ENCODE measurements at regions of chr3 and their contacts with region 1.

Region 1: GRCh38 chr3:18382760-18383369 is 42.3 kb downstream of the SATB1 start:
- DNase-seq: no peak
- ATAC-seq: peak; percentile 32
- H3K4me3 ChIP-seq: no peak overlapping the region
- H3K4me3 Mint-ChIP-seq: peak overlapping the region in 9 of 10 donors; percentile 4 to 74 (median 49)
- H3K27ac ChIP-seq: no peak overlapping the region
- H3K27ac Mint-ChIP-seq: peak overlapping the region; percentile 34 to 91 (median 51)
- H3K4me1 ChIP-seq: peaks cover 0 to 46% of the 10 kb centered on the region in 2 donors
- H3K4me1 Mint-ChIP-seq: peaks cover 19 to 94% (median 84%) of the 10 kb centered on the region in 7 donors
- H3K27me3 ChIP-seq: no peaks in the 10 kb centered on the region
- H3K27me3 Mint-ChIP-seq: no peaks in the 10 kb centered on the region

Region 2: DNA sequence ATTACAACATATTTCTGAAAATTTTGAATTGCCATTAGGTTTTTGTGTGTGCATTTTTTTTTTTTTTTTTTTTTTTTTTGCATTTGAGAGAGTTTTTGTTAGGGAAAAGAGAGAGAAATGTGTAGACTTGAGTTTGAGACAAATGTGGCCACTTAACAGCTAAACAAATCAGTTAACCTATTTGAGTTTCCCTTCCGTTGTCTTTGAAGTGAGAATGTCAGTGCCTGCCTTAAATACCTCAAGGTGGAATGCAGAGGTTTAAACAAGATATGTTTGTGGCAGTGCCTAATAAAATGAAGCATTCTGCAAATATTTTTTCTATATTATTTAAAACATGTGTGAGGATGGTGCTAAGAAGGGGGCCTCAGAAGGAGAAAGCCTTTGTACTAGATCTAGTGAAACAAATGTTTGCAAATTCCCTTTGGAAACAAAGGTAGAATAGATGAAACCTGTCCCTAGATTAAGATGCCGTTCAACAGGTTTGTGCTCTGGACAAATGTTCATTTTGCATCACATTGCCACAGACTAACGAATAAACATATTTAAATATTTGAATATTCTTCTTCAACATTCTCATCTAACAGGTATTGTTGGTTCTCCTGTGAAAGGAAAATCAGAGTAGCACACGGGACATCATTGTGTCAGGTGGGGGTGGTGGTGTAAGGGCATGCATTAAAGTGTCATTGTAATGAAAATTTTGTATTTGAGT is 38.4 kb before region 1 on chr3:
- CTCF ChIA-PET with region 1: interaction called, 3 read pairs
- POLR2A ChIA-PET with region 1: no interaction called
- intact Hi-C with region 1: loop called in 1 of 2 experiments (anchors 5 kb)
- DNase-seq: peak in 1 of 9 donors; percentile 28
- ATAC-seq: no peak
- H3K4me3 ChIP-seq: no peak overlapping the region
- H3K4me3 Mint-ChIP-seq: peak overlapping the region in 4 of 10 donors; percentile 1 to 49 (median 13)
- H3K27ac ChIP-seq: no peak overlapping the region
- H3K27ac Mint-ChIP-seq: peak overlapping the region in 7 of 9 donors; percentile 2 to 73 (median 33)
- H3K4me1 ChIP-seq: peaks cover 0 to 13% of the 10 kb centered on the region in 2 donors
- H3K4me1 Mint-ChIP-seq: peaks cover 5 to 45% (median 28%) of the 10 kb centered on the region in 7 donors
- H3K27me3 ChIP-seq: no peaks in the 10 kb centered on the region
- H3K27me3 Mint-ChIP-seq: peaks cover 0 to 15% (median 0%) of the 10 kb centered on the region in 5 donors

Region 3: DNA sequence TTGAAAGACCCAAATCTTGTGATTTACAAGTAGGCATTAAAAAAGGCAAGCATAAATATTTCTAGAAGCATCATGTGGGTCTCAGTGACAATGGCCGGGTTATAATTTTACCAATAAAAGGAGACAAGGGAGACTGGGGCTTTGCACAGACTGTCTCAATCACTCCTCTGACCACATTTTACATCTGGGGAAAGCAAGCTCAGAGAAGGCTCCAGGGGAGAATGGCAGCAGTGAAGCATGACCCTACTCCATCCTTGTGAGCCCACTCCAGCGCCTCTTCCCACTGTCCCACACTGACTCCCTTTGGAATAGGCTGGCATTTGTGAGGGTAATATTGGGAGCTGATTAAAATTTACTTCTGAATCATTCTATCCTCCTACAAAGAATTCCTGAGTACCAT is 19.5 kb before region 1 on chr3:
- CTCF ChIA-PET with region 1: no interaction called
- POLR2A ChIA-PET with region 1: interaction called, 4 read pairs
- intact Hi-C with region 1: loop called in 1 of 2 experiments (anchors 2 kb)
- DNase-seq: no peak
- ATAC-seq: no peak
- H3K4me3 ChIP-seq: no peak overlapping the region
- H3K4me3 Mint-ChIP-seq: peak overlapping the region in 1 of 10 donors; percentile 15
- H3K27ac ChIP-seq: no peak overlapping the region
- H3K27ac Mint-ChIP-seq: peak overlapping the region; percentile 17 to 88 (median 73)
- H3K4me1 ChIP-seq: peaks cover 0 to 11% of the 10 kb centered on the region in 2 donors
- H3K4me1 Mint-ChIP-seq: peaks cover 30 to 96% (median 85%) of the 10 kb centered on the region in 7 donors
- H3K27me3 ChIP-seq: no peaks in the 10 kb centered on the region
- H3K27me3 Mint-ChIP-seq: no peaks in the 10 kb centered on the region

Region 4: DNA sequence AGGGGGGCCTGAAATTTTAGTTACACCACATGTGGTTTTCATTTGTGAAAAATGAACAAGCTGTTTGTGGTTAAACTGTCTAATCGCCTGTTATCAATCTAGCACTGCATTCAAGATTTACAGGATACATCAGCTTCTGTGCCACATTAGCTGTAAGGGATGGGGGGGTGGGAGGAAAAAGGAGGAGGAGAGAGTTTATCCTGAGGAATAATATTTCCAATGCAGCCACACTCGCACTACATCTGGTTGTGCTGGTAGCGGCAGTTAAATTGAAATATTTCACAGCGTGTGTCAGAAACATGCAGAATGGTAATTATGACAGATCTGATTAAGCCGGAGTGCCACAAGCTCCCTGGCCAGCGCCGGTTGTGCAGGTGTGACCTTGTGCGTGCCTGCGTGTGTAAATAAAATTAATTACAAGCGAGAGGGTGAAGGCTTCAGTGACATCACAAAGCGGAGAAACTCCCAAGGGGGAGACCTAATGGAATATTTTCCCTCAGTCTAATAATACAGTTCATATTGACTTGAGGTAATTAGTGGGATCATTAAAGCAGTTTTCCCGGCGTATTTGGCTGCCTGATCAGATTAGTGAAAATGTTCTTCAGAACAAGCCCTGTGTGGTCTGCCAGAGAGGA is 13.2 kb before region 1 on chr3:
- CTCF ChIA-PET with region 1: interaction called, 3 read pairs
- POLR2A ChIA-PET with region 1: interaction called, 6 read pairs
- intact Hi-C with region 1: loop called (anchors 1 to 2 kb)
- DNase-seq: no peak
- ATAC-seq: no peak
- H3K4me3 ChIP-seq: no peak overlapping the region
- H3K4me3 Mint-ChIP-seq: peak overlapping the region in 9 of 10 donors; percentile 23 to 74 (median 56)
- H3K27ac ChIP-seq: peak overlapping the region; percentile 4
- H3K27ac Mint-ChIP-seq: peak overlapping the region; percentile 26 to 89 (median 78)
- H3K4me1 ChIP-seq: peaks cover 10 to 48% of the 10 kb centered on the region in 2 donors
- H3K4me1 Mint-ChIP-seq: peaks cover 55 to 100% (median 99%) of the 10 kb centered on the region in 7 donors
- H3K27me3 ChIP-seq: no peaks in the 10 kb centered on the region
- H3K27me3 Mint-ChIP-seq: no peaks in the 10 kb centered on the region